Psoas muscle (tissue), 8 donors: ENCODE measurements at regions of chr11 and their contacts with region 1.

Region 1: GRCh38 chr11:3037040-3037944 is 19.9 kb downstream of the CARS1 start:
- DNase-seq: peak; percentile 85 to 91
- ATAC-seq: peak; percentile 49 to 69 (median 52)
- H3K4me3 ChIP-seq: no peak overlapping the region
- H3K27ac ChIP-seq: no peak overlapping the region
- H3K4me1 ChIP-seq: peaks cover 13% of the 10 kb centered on the region
- H3K27me3 ChIP-seq: no peaks in the 10 kb centered on the region
- CTCF ChIP-seq: peak; percentile 86

Region 2: GRCh38 chr11:2860636-2861035 is 176.7 kb before region 1 on chr11:
- intact Hi-C with region 1: no loop called
- DNase-seq: no peak
- ATAC-seq: no peak
- H3K4me3 ChIP-seq: no peak overlapping the region
- H3K27ac ChIP-seq: no peak overlapping the region
- H3K4me1 ChIP-seq: no peaks in the 10 kb centered on the region
- H3K27me3 ChIP-seq: peaks cover 0 to 19% (median 7%) of the 10 kb centered on the region in 3 donors
- CTCF ChIP-seq: no peak

Region 3: GRCh38 chr11:3091791-3092602 is 54.7 kb after region 1 on chr11:
- intact Hi-C with region 1: loop called (anchors 1 to 2 kb)
- DNase-seq: peak; percentile 66 to 83
- ATAC-seq: peak; percentile 72 to 90 (median 81)
- H3K4me3 ChIP-seq: no peak overlapping the region
- H3K27ac ChIP-seq: no peak overlapping the region
- H3K4me1 ChIP-seq: peaks cover 14% of the 10 kb centered on the region
- H3K27me3 ChIP-seq: no peaks in the 10 kb centered on the region
- CTCF ChIP-seq: peak; percentile 99

Region 4: DNA sequence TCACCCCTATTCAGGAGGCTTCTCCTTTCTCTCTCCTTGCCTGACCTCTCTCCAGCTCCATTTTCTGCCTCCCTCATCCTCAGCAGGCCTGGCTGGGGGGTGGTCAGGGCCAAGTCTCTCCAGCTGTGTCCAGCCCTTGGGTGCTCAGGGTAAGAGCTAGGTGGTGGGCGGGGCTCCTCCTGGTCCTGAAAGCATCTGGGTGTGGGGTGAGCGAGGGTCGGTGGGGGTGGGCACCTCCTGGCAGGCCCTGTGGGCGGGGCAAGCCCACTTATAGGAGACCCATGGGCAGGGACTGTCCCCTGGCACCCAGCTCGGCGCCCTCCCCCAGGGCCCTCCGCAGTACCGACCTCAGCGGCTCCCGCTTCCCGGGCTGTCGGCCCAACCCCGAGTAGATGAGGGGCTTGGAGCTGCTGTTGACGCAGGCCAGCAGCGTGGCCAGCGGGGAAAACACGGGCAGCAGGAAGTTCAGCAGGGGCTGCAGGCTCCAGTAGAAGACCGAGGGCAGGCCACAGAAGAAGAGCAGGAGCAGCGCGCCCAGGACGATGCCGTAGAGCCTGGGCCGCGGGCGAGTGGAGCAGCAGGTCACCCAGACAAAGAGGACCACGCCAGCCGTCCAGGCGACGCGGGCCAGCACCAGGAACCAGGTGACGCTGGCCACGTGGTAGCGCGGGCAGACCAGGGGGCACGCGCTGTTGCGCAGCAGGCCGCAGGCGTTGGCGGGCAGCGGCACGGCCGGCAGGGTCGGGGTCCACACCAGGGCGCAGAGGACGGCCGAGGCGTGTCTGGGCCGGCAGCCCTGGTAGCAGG is 180.6 kb after region 1 on chr11:
- intact Hi-C with region 1: loop called in 1 of 2 experiments (anchors 2 kb)
- DNase-seq: no peak
- ATAC-seq: peak in 3 of 4 donors; percentile 6 to 23 (median 7)
- H3K4me3 ChIP-seq: no peak overlapping the region
- H3K27ac ChIP-seq: no peak overlapping the region
- H3K4me1 ChIP-seq: no peaks in the 10 kb centered on the region
- H3K27me3 ChIP-seq: peaks cover 0 to 51% (median 20%) of the 10 kb centered on the region in 3 donors
- CTCF ChIP-seq: no peak